ENCODE measurements at regions of chr14 and their contacts with region 1.

Region 1: DNA sequence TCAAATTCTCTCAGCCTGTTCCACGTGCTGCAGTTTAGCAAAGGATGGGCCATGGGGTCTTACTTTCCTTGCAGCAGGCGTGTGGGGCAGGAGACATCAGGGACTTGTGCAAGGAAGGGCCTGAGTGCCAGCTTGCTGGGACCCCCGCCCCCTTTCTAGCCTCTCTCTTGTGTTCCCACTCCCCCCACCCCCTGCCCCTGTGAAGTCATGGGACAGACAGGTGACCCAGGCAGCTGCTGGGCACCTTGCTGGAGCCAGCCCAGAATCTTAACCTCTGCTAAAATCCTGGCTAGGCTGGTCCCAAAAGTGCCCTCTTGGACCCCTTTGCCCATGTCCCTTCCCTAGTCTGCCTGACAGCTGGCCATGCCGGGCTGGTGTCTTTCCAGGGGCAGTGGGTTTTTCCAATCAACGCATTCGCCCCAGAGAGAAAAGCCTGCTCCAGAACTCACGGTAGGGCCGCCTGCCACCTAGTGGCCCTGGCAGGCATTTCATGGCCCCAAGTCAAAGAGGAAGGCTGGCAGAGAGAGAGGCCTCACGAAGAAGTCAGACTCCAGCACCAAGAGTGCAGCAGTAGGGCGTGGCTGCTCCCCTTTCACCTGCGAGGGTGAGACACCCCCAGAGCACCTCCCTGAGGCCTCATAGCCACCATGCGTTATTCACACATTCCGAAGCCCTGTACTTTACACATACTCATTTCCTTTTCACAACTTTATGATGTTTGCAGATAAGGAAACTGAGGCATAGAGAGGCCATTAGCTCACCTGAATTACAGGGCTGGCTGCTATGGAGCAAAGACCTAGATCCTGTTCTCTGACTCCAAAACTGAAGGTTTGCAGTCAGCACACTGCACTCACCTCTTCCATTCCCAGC is 67.4 kb downstream of the LGMN start:
- DNase-seq: peak; percentile 81
- CTCF ChIP-seq: peak; percentile 92

Region 2: GRCh38 chr14:92456215-92457015 is 224.6 kb before region 1 on chr14:
- CTCF ChIA-PET with region 1: interaction called, 10 read pairs
- POLR2A ChIA-PET with region 1: no interaction called
- DNase-seq: peak; percentile 77
- CTCF ChIP-seq: peak; percentile 62

Region 3: DNA sequence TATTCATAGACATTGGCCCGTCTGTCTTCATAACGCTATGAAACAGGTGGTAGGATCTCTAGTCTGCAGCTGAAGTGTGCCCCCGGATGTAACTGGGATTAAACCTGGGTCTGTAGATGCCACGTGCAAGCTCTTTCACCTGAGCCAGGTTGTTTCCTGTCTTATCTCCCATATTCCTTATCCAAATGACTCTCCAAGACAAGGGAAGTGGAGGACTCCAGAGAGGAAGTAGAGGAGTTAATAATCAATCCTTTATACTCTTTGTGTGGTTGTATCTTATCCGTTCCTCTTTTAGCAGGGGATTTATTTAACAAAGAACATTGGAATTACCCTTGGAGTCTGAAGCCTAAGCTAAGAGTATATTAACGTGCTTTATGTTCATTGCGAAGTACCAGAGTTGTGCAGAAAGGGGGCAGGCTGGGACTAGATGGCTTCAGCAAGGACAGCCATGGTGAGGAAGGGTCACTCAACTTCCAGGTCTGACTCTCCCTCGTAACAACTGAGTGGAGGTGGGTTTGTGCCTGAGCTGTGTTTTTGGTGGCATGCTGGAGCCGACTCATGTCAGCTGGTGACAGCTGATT is 84.6 kb before region 1 on chr14:
- CTCF ChIA-PET with region 1: interaction called, 10 read pairs
- POLR2A ChIA-PET with region 1: interaction called, 3 read pairs
- DNase-seq: no peak
- CTCF ChIP-seq: no peak

Region 4: DNA sequence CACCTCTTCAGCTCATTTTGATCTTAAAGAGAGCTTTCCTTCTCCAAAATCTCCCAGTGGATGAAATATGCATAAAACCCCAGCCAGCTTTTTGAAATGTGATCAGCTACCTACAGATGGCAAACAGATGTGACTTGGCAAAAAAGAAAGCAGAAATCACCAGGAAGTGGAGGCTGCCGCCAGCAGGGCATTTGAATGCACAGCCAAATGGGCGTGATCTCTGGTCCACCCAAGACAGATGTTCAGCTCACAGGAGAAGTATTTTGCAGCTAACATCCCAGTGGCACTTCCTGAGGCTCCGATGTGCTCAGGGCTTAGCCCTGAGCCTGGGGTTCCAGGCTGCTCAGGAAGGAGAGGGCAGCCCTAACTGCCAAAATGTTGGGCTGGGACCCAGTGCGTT is 10.9 kb before region 1 on chr14:
- CTCF ChIA-PET with region 1: interaction called, 16 read pairs
- POLR2A ChIA-PET with region 1: interaction called, 13 read pairs
- DNase-seq: no peak
- CTCF ChIP-seq: peak; percentile 13

Region 5: DNA sequence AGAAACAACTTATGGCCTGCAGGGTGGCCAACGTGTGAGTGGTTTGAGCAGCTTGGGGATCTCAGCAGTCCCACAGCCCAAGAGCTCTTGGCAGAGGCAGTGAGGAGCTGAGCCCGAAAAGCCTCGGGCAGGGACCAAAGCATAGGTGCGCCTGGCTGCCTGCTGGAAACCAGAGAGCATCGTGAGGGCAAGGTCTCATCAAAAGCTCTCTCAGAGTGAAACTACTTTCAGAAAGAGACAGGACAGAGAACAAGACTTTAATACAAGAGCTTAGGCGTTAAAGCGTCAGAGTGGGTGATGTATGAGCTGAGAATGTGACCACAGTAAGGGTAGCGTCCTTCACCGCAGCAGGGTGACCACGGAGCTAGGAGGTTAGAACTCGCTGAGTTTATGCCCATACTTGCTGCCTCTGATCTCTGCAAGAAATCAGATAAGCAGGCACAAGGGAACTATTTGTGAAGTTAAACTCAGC is 36.6 kb after region 1 on chr14:
- CTCF ChIA-PET with region 1: no interaction called
- POLR2A ChIA-PET with region 1: no interaction called
- DNase-seq: no peak
- CTCF ChIP-seq: no peak